Heart left ventricle (tissue), 16 donors: ENCODE measurements at regions of chr14 and their contacts with region 1.

Region 1: GRCh38 chr14:69460093-69460701 is 24.3 kb upstream of the PLEKHD1 start:
- DNase-seq: peak in 4 of 5 donors; percentile 44 to 61 (median 52)
- ATAC-seq: peak in 3 of 4 donors; percentile 83 to 92 (median 86)
- H3K4me3 ChIP-seq: no peak overlapping the region
- H3K27ac ChIP-seq: no peak overlapping the region
- H3K4me1 ChIP-seq: peaks cover 0 to 7% (median 0%) of the 10 kb centered on the region in 12 donors
- H3K27me3 ChIP-seq: no peaks in the 10 kb centered on the region
- CTCF ChIP-seq: peak; percentile 57 to 88 (median 75)
- POLR2A ChIP-seq: no peak

Region 2: GRCh38 chr14:69346710-69347109 is 113.5 kb before region 1 on chr14:
- intact Hi-C with region 1: no loop called
- DNase-seq: peak in 2 of 5 donors; percentile 52 to 71
- ATAC-seq: peak in 2 of 4 donors; percentile 14 to 32
- H3K4me3 ChIP-seq: no peak overlapping the region
- H3K27ac ChIP-seq: no peak overlapping the region
- H3K4me1 ChIP-seq: peaks cover 0 to 9% (median 5%) of the 10 kb centered on the region in 12 donors
- H3K27me3 ChIP-seq: no peaks in the 10 kb centered on the region
- CTCF ChIP-seq: peak; percentile 27 to 61 (median 50)
- POLR2A ChIP-seq: no peak

Region 3: DNA sequence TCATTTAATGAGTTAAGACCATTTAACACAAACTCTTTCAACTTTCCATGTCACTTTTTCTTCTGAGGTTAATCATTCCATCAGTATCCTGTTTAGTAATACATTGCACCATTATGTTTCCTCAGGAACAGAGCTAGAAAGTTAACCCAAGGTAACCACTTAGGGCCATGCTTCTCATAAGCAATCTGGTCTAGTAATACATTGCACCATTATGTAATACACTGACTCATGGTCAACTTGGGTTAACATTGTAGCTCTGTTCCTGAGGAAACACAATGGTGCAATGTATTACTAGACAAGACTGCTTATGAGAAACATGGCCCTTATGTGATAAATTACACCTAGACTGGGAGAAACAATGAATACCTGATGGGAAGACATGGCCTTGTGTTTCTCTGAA is 83.8 kb before region 1 on chr14:
- intact Hi-C with region 1: loop called in 1 of 10 experiments (anchors 10 kb)
- DNase-seq: no peak
- ATAC-seq: peak in 2 of 4 donors; percentile 28 to 53
- H3K4me3 ChIP-seq: no peak overlapping the region
- H3K27ac ChIP-seq: no peak overlapping the region
- H3K4me1 ChIP-seq: peaks cover 0 to 10% (median 1%) of the 10 kb centered on the region in 12 donors
- H3K27me3 ChIP-seq: no peaks in the 10 kb centered on the region
- CTCF ChIP-seq: no peak
- POLR2A ChIP-seq: no peak

Region 4: GRCh38 chr14:69398053-69398817 is 62.0 kb before region 1 on chr14 and contains the starts of genes ERH and SLC39A9:
- intact Hi-C with region 1: loop called in 1 of 10 experiments (anchors 5 kb)
- DNase-seq: peak; percentile 96 to 97 (median 97)
- ATAC-seq: peak; percentile 97 to 98 (median 98)
- H3K4me3 ChIP-seq: peak within 1 kb of the TSS; percentile 52 to 95 (median 80)
- H3K27ac ChIP-seq: peak within 1 kb of the TSS; percentile 81 to 97 (median 90)
- H3K4me1 ChIP-seq: peaks cover 10 to 63% (median 45%) of the 10 kb centered on the region in 12 donors
- H3K27me3 ChIP-seq: no peaks in the 10 kb centered on the region
- CTCF ChIP-seq: peak in 1 of 12 donors; percentile 8
- POLR2A ChIP-seq: peak in 1 of 2 donors; percentile 41
- total RNA-seq, gene ERH: 44.3 to 147 (median 128) TPM
- total RNA-seq, gene SLC39A9: 16.9 to 37.5 (median 25.5) TPM